CD4-positive, alpha-beta T cell (primary cell): ENCODE measurements at regions of chr1 and their contacts with region 1.

Region 1: DNA sequence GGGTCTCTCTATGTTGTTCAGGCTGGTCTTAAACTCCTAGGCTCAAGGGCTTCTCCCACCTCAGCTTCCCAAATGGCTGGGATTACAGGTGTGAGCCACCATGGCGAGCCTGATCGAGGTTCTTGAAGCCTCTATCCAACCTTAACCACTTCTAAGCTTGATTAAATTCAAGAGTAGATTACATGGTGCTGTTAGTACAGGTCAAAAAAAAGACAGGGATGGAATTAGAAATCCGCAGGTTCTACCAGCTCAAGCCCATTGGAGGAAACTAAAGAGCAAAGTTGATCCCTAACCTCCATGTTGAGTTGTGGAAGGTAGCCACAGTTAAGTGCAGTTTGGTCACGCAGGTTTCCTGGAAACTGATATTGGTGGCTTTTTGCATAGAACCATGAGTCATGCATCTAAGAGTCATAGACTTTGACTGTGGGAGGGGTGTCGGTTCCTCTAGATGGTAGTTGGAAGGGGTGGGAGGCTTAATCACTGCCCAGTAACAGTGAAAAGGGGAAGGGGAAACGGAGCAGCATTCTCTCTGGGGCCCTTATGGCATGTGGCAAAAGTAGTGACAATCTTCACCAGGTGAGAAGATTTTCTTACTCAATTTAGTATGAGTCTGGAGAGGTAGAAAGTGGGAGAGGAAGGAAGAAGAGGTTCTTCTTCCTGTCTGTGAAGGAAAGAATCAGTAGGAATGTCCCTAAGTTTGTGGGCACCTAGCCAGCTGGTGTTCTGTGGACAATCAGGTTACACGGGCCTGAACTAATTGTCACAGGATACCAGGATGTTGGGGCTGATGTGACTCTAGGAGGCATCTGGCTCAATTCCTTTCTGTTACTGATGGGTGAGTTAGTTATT is 7.0 kb downstream of the CD53 start:
- DNase-seq: peak in 10 of 14 experiments; percentile 19 to 86 (median 53)
- ATAC-seq: peak; percentile 51
- H3K4me3 ChIP-seq: peak overlapping the region; percentile 33
- H3K4me3 Mint-ChIP-seq: peak overlapping the region; percentile 76
- H3K27ac ChIP-seq: peak overlapping the region; percentile 59 to 78
- H3K27ac Mint-ChIP-seq: peak overlapping the region; percentile 95
- H3K4me1 ChIP-seq: peaks cover 34% of the 10 kb centered on the region
- H3K4me1 Mint-ChIP-seq: peaks cover 89% of the 10 kb centered on the region
- H3K27me3 ChIP-seq: no peaks in the 10 kb centered on the region
- H3K27me3 Mint-ChIP-seq: no peaks in the 10 kb centered on the region
- CTCF ChIP-seq: no peak

Region 2: DNA sequence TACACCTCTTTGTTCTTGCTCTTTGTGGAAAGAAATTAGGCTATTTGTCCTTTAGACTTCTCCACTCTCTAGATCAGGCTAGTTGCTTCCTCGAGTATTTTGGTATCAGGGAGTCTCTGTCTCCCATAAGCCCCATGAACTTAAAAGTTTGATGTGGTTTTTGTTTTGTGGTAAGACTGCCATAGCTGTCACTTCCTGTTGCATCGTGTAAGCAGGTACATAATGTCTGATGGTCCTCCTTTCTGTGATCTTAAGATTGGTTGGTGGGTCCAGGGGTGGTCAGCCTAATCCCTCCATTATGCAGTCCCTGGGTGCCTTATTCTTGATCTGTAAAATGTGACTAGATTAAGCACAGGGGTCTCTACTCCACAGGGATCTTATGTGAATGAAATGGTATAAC is 16.1 kb after region 1 on chr1:
- CTCF ChIA-PET with region 1: interaction called, 4 read pairs
- POLR2A ChIA-PET with region 1: interaction called, 15 read pairs
- intact Hi-C with region 1: loop called in 1 of 2 experiments (anchors 2 kb)
- DNase-seq: peak in 3 of 14 experiments; percentile 65 to 77 (median 71)
- ATAC-seq: peak; percentile 66
- H3K4me3 ChIP-seq: no peak overlapping the region
- H3K4me3 Mint-ChIP-seq: peak overlapping the region; percentile 68
- H3K27ac ChIP-seq: peak overlapping the region; percentile 29 to 38
- H3K27ac Mint-ChIP-seq: peak overlapping the region; percentile 92
- H3K4me1 ChIP-seq: peaks cover 73% of the 10 kb centered on the region
- H3K4me1 Mint-ChIP-seq: peaks cover 86% of the 10 kb centered on the region
- H3K27me3 ChIP-seq: no peaks in the 10 kb centered on the region
- H3K27me3 Mint-ChIP-seq: no peaks in the 10 kb centered on the region
- CTCF ChIP-seq: no peak

Region 3: DNA sequence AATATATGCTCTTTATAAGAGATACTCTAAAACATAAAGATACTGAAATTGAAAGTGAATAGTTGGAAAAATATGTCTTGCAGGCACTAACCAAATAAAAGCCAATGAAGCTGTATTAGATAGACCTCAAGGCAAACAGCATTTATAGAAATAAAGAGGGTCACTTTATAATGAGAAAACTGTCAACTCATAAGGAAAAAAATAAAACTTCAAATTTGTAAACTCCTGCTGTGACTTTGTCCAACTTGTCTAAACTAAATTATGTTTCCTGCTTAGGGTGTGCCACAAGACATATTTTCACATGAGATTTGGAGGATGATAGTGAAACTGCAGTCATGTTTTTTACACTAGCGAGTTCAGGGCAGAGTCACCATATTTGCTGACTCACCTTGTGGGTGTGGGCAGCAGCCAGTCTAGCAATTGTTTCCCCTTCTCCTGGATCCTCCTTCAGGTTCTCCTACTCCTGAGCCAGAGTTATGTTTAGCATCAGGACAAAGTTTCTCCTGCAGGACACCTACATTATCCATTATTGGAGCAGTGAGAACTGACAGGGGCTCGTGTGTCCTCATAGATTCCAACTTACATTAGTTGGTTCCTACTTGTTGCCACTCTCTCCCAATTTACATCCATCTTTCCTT is 36.8 kb after region 1 on chr1:
- CTCF ChIA-PET with region 1: no interaction called
- POLR2A ChIA-PET with region 1: no interaction called
- intact Hi-C with region 1: loop called in 1 of 2 experiments (anchors 5 kb)
- DNase-seq: peak in 4 of 14 experiments; percentile 19 to 55 (median 42)
- ATAC-seq: peak; percentile 54
- H3K4me3 ChIP-seq: no peak overlapping the region
- H3K4me3 Mint-ChIP-seq: no peak overlapping the region
- H3K27ac ChIP-seq: no peak overlapping the region
- H3K27ac Mint-ChIP-seq: no peak overlapping the region
- H3K4me1 ChIP-seq: peaks cover 4% of the 10 kb centered on the region
- H3K4me1 Mint-ChIP-seq: peaks cover 13% of the 10 kb centered on the region
- H3K27me3 ChIP-seq: no peaks in the 10 kb centered on the region
- H3K27me3 Mint-ChIP-seq: peaks cover 18% of the 10 kb centered on the region
- CTCF ChIP-seq: no peak

Region 4: DNA sequence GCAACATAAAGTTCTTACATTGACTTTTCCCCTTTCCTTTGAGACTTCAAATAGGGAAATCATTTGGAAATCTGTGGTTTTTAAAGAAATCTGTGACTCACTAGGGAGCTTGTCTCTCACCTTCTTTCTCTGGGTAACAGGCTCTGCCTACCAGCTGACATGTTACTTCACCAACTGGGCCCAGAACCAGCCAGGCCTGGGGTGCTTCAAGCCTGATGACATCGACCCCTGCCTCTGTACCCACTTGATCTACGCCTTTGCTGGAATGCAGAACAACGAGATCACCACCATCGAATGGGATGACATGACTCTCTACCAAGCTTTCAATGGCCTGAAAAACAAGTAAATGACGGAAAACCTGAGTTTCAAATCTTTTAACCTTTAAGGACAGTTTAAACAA is 401.4 kb after region 1 on chr1:
- CTCF ChIA-PET with region 1: no interaction called
- POLR2A ChIA-PET with region 1: no interaction called
- intact Hi-C with region 1: no loop called
- DNase-seq: no peak
- ATAC-seq: no peak
- H3K4me3 ChIP-seq: no peak overlapping the region
- H3K4me3 Mint-ChIP-seq: no peak overlapping the region
- H3K27ac ChIP-seq: no peak overlapping the region
- H3K27ac Mint-ChIP-seq: no peak overlapping the region
- H3K4me1 ChIP-seq: no peaks in the 10 kb centered on the region
- H3K4me1 Mint-ChIP-seq: no peaks in the 10 kb centered on the region
- H3K27me3 ChIP-seq: no peaks in the 10 kb centered on the region
- H3K27me3 Mint-ChIP-seq: no peaks in the 10 kb centered on the region
- CTCF ChIP-seq: no peak